Sigmoid colon (tissue), 7 donors: ENCODE measurements at regions of chr6 and their contacts with region 1.

Region 1: DNA sequence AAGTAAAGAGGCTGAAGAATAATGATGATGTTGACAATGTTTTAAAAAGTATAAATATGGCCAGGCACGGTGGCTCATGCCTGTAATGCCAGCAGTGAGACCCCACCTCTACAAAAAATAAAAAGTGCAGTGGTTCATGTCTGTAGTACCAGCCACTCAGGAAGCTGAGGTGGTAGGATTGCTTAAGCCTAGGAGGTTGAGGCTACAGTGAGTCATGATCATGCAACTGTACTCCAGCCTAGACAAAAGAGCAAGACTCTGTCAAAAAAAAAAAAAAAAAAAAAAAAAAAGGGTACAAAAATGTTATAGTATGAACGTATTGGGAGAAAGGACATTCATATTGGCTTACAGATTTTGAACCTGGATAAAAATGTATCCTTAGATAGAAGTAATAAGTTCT is 543.1 kb upstream of the IRAK1BP1 start:
- DNase-seq: no peak
- H3K4me3 ChIP-seq: no peak overlapping the region
- H3K27ac ChIP-seq: no peak overlapping the region
- H3K4me1 ChIP-seq: no peaks in the 10 kb centered on the region
- H3K27me3 ChIP-seq: no peaks in the 10 kb centered on the region
- CTCF ChIP-seq: no peak
- EP300 ChIP-seq: no peak
- POLR2A ChIP-seq: no peak

Region 2: DNA sequence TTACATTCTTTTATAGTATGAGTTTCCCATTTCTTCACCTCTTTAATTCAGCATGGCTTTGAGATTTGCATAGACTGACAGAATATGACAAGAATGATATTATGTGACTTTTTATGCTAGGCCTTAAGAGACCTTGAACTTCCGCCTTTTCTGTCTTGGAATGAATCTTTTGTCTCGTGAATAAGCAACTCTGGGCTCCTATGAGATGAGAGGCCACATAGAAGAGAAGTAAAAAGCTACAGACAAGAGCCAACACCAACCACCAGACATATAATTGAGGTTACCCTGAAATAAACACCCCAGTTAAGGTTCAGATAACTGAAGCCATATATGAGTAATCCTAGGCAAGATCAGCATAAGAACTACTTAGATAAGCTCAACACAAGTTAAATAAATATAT is 70.6 kb before region 1 on chr6:
- intact Hi-C with region 1: loop called (anchors 2 kb)
- DNase-seq: no peak
- H3K4me3 ChIP-seq: no peak overlapping the region
- H3K27ac ChIP-seq: no peak overlapping the region
- H3K4me1 ChIP-seq: no peaks in the 10 kb centered on the region
- H3K27me3 ChIP-seq: no peaks in the 10 kb centered on the region
- CTCF ChIP-seq: no peak
- EP300 ChIP-seq: no peak
- POLR2A ChIP-seq: no peak